ENCODE measurements at regions of chr6 and their contacts with region 1.

Region 1: DNA sequence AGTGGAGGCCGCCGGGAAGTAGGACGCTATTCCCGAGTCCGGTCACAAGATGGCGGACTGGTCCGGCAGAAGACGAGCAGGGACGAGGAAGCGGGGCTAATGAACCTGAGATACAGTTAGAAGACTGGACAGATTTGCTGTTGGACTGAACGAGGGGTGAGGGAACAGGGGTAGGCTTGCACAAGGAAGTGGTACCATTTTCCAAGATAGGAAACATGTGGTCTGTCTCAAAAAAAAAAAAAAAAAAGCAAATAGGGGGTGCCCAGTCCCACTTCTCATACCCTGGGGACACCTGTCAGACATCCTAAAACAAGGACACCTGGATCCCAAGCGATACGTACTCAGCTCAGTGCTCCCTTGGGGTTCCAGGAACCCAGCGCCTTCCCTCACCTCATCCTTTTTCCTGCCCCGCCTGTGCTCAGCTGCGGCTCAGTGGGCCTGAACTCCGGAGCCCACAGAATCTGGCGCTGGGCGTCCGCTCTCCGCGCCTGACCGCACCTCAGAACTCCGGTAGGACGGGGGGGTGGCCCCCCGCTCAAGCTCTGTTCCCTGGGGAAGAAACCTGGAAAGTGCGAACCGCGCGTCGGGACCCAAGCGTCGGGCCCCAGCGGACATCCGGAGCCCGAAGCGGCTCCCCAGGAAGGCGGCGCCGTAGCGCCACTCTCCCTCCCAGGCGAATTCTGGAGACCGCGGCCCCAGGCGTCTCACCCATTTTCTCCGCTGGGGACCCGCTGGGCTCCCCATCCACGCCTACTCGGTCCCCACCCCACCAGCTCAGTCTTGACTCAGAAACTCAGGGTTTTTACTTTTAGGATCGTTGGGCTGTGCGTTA is at the start of gene LY6G5C:
- H3K4me3 ChIP-seq: peak within 1 kb of the TSS; percentile 27
- H3K27ac ChIP-seq: no peak within 1 kb of the TSS; the same call in 1 of the 2 replicates
- H3K4me1 ChIP-seq: no peaks in the 10 kb centered on the region; the same call in 1 of the 2 replicates
- CTCF ChIP-seq: peak; percentile 68; the same call in 1 of the 2 replicates

Region 2: GRCh38 chr6:31304683-31305082 is 376.4 kb before region 1 on chr6:
- CTCF ChIA-PET with region 1: no interaction called
- POLR2A ChIA-PET with region 1: no interaction called
- H3K4me3 ChIP-seq: no peak overlapping the region
- H3K27ac ChIP-seq: no peak overlapping the region
- H3K4me1 ChIP-seq: no peaks in the 10 kb centered on the region
- CTCF ChIP-seq: no peak

Region 3: DNA sequence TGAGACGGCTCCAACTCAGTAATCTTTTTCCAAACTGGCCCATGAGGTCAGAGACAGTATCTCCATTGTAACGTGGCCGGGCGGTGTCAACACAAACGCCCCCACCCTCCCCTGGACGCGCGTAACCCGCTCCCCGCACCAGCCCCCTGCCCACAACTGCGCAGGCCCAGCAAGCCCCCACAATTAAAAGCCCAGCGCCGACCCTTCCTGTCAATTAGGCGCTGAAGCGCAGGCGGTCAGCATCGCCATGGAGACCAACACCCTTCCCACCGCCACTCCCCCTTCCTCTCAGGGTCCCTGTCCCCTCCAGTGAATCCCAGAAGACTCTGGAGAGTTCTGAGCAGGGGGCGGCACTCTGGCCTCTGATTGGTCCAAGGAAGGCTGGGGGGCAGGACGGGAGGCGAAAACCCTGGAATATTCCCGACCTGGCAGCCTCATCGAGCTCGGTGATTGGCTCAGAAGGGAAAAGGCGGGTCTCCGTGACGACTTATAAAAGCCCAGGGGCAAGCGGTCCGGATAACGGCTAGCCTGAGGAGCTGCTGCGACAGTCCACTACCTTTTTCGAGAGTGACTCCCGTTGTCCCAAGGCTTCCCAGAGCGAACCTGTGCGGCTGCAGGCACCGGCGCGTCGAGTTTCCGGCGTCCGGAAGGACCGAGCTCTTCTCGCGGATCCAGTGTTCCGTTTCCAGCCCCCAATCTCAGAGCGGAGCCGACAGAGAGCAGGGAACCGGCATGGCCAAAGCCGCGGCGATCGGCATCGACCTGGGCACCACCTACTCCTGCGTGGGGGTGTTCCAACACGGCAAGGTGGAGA is 134.2 kb after region 1 on chr6 and contains the starts of genes HSPA1A and HSPA1L:
- CTCF ChIA-PET with region 1: interaction called, 3 read pairs
- POLR2A ChIA-PET with region 1: interaction called, 13 read pairs
- H3K4me3 ChIP-seq: peak within 1 kb of the TSS; percentile 46
- H3K27ac ChIP-seq: peak within 1 kb of the TSS; percentile 80
- H3K4me1 ChIP-seq: peaks cover 4% of the 10 kb centered on the region; the same call in 1 of the 2 replicates
- CTCF ChIP-seq: no peak

Region 4: GRCh38 chr6:32060966-32061655 is 380.1 kb after region 1 on chr6:
- CTCF ChIA-PET with region 1: no interaction called
- POLR2A ChIA-PET with region 1: no interaction called
- H3K4me3 ChIP-seq: no peak overlapping the region
- H3K27ac ChIP-seq: no peak overlapping the region
- H3K4me1 ChIP-seq: no peaks in the 10 kb centered on the region
- CTCF ChIP-seq: no peak